ENCODE measurements at regions of chr6 and their contacts with region 1.

Region 1: GRCh38 chr6:128216917-128217316 is 303.5 kb downstream of the PTPRK start:
- DNase-seq: no peak
- ATAC-seq: no peak

Region 2: GRCh38 chr6:128098000-128098581 is 118.8 kb before region 1 on chr6:
- intact Hi-C with region 1: no loop called
- DNase-seq: no peak
- ATAC-seq: no peak

Region 3: DNA sequence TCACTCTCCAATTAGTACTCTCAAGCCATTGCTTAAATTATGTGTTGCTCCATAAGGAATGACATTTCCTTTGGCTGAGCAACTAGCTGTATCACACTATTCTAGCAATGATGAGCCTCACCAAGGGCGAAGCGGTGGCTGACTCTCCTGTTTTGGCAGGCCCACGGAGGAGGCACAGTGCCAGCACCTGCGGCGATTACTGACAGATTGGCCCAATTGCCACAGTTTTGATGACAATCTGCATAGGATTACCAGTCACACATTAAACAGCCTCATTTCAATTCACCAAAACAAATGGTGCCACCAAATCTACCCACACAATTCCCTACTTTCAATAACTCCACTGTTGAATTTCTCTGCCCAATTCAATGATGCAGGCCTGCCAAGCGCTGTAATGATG is 16.6 kb after region 1 on chr6:
- intact Hi-C with region 1: loop called (anchors 1 kb)
- DNase-seq: no peak
- ATAC-seq: no peak